ENCODE measurements at regions of chr12 and their contacts with region 1.

Region 1: GRCh38 chr12:50314629-50315312 is 31.5 kb upstream of the LIMA1 start:
- DNase-seq: peak in 2 of 9 experiments; percentile 30 to 43
- ATAC-seq: no peak
- H3K4me3 ChIP-seq: no peak overlapping the region
- H3K4me3 Mint-ChIP-seq: no peak overlapping the region
- H3K27ac ChIP-seq: no peak overlapping the region
- H3K27ac Mint-ChIP-seq: no peak overlapping the region
- H3K4me1 ChIP-seq: no peaks in the 10 kb centered on the region
- H3K4me1 Mint-ChIP-seq: no peaks in the 10 kb centered on the region
- H3K27me3 ChIP-seq: no peaks in the 10 kb centered on the region
- H3K27me3 Mint-ChIP-seq: no peaks in the 10 kb centered on the region
- CTCF ChIP-seq: peak; percentile 48

Region 2: DNA sequence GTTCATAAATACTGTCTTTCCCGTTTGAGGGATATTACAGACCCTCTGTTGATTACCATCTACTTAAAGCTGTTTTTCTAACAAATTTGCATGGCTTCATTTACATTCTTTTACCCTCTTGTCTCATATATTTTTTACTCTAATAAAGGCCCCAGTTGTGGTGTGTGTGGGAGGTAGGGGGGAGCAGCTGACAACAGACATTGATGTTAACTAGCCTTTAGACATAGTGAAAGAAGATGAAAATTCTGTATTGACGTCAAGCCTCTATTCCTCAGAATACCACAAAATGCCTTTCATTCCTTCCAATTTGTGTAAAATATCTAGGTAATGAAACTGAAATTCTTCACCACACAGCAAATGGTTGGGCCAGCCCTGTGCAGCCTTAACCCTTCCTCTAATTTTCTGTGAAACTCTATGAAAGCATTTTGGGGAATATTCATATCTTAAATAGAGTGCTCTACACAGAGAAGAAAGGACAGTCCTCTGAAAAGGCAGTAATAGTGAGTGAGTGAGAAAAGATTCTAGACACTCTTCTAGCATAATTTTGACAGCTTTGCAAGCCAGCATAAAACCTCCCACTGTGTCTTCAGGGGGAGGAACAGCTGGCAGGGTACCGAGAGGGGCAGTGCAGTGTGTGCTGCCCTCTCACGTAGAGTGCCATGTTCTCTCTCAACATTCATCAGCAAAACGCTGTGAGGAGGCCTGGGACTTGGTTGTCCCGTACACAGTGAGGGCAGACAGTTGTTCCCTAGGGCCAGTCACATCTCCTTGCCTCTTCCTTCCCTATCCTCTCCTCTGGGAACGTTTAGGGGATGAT is 127.5 kb before region 1 on chr12:
- CTCF ChIA-PET with region 1: interaction called, 3 read pairs
- POLR2A ChIA-PET with region 1: no interaction called
- intact Hi-C with region 1: loop called (anchors 10 kb)
- DNase-seq: no peak
- ATAC-seq: no peak
- H3K4me3 ChIP-seq: no peak overlapping the region
- H3K4me3 Mint-ChIP-seq: no peak overlapping the region
- H3K27ac ChIP-seq: no peak overlapping the region
- H3K27ac Mint-ChIP-seq: no peak overlapping the region
- H3K4me1 ChIP-seq: no peaks in the 10 kb centered on the region
- H3K4me1 Mint-ChIP-seq: peaks cover 9% of the 10 kb centered on the region
- H3K27me3 ChIP-seq: no peaks in the 10 kb centered on the region
- H3K27me3 Mint-ChIP-seq: no peaks in the 10 kb centered on the region
- CTCF ChIP-seq: no peak